AG04449 (cell line): ENCODE measurements at regions of chr17 and their contacts with region 1.

Region 1: DNA sequence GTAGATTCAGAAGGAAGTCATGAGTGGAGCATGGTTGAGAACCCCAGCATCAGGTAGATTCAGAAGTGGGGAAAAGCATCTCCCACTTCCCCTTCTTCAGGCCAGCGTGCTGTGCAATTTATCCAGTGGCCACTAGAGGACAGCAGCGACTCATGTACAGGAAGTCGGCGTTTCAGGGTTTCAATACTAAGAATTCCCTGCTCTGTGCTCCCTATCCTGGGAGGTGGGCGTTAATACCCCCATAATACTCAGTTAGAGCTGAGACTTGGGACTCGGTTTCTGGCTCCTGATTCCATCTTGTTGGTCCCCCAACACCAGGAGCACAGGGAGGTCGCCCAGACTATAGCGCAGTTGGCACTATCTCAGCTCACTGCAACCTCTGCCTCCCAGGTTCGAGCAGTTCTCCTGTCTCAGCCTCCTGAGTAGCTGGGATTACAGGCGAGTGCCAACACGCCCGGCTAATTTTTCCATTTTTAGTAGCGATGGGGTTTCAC is 75.3 kb upstream of the AMZ2 start:
- DNase-seq: no peak
- H3K4me3 ChIP-seq: no peak overlapping the region
- CTCF ChIP-seq: peak; percentile 80

Region 2: GRCh38 chr17:68184816-68185436 is 12.4 kb after region 1 on chr17:
- CTCF ChIA-PET with region 1: interaction called, 23 read pairs
- POLR2A ChIA-PET with region 1: no interaction called
- DNase-seq: no peak
- H3K4me3 ChIP-seq: no peak overlapping the region
- CTCF ChIP-seq: no peak

Region 3: GRCh38 chr17:68205251-68205807 is 32.8 kb after region 1 on chr17:
- CTCF ChIA-PET with region 1: interaction called, 107 read pairs
- POLR2A ChIA-PET with region 1: no interaction called
- DNase-seq: peak; percentile 17
- H3K4me3 ChIP-seq: peak overlapping the region; percentile 79
- CTCF ChIP-seq: peak; percentile 94

Region 4: GRCh38 chr17:68435876-68436842 is 263.7 kb after region 1 on chr17:
- CTCF ChIA-PET with region 1: interaction called, 10 read pairs
- POLR2A ChIA-PET with region 1: no interaction called
- DNase-seq: no peak
- H3K4me3 ChIP-seq: no peak overlapping the region
- CTCF ChIP-seq: peak; percentile 95

Region 5: DNA sequence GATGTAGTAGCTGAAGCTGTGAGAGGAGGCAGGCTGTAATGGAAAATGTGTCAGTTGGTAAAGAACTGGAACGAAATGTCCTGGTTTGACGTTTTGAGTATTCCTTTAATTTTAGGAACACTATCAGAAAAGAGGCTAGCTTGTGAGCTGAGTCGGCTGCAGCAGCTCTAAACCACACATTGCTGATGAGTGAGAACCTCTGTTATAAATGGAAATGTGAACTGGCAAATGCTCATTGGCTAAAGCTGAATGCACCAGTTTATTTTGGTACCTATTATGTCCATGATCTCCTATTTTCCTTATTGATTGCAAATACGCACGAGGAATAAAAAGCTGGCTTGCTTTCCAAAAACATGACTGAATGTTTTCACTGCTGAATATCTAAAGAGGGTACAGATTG is 295.8 kb after region 1 on chr17:
- CTCF ChIA-PET with region 1: interaction called, 44 read pairs
- POLR2A ChIA-PET with region 1: no interaction called
- DNase-seq: no peak
- H3K4me3 ChIP-seq: no peak overlapping the region
- CTCF ChIP-seq: no peak